ENCODE measurements at regions of chr17 and their contacts with region 1.

Region 1: DNA sequence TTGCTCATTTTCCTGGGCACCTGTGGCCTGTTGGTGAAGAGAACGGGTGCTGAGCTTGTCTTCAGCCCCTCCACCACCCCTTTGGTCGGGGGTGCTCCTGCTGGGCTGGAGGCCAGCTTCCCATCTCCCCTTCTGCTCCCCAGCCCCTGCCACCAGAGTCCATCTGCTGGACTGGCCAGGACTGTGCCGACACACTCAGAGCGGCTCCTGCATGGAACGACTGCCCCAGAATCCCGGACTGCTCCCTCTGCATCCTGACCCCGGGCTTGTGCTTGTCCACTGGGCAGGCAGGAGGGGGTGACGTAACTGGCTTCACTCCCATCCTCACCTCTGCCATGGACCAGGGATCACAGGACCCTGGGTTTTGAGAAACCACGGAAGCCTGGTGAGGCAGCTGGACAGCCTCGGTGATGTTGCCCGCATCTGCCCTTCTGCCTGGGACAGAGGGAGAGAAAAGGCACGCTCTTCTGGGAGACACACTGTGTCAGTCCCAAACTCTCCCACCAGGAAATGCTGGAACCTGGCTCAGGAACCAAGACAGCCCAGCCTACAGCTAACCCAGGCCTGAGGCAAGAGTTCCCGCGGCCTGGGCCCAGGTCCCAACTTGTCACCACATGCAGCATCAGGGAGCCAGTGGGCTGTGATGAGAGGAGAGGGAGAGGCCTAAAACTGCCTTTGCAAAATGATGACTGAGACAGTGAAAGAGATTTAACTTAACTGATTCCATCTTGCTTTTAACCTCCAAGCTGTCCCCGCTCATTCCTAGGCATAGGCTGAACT is 16.1 kb upstream of the GSDMA start:
- DNase-seq: no peak
- ATAC-seq: no peak
- H3K4me3 ChIP-seq: no peak overlapping the region
- H3K4me3 Mint-ChIP-seq: no peak overlapping the region
- H3K27ac ChIP-seq: no peak overlapping the region
- H3K27ac Mint-ChIP-seq: no peak overlapping the region
- H3K4me1 ChIP-seq: peaks cover 0 to 20% of the 10 kb centered on the region in 2 experiments
- H3K4me1 Mint-ChIP-seq: peaks cover 15 to 19% (median 18%) of the 10 kb centered on the region in 3 donors
- H3K27me3 ChIP-seq: peaks cover 0 to 19% of the 10 kb centered on the region in 2 experiments
- H3K27me3 Mint-ChIP-seq: no peaks in the 10 kb centered on the region

Region 2: GRCh38 chr17:40038882-40039513 is 92.3 kb after region 1 on chr17:
- CTCF ChIA-PET with region 1: interaction called in 1 of 2 experiments, 11 read pairs
- POLR2A ChIA-PET with region 1: no interaction called
- DNase-seq: peak in 1 of 35 experiments; percentile 34
- ATAC-seq: no peak
- H3K4me3 ChIP-seq: no peak overlapping the region
- H3K4me3 Mint-ChIP-seq: no peak overlapping the region
- H3K27ac ChIP-seq: no peak overlapping the region
- H3K27ac Mint-ChIP-seq: peak overlapping the region in 1 of 2 donors; percentile 22
- H3K4me1 ChIP-seq: no peaks in the 10 kb centered on the region
- H3K4me1 Mint-ChIP-seq: peaks cover 0 to 7% (median 0%) of the 10 kb centered on the region in 3 donors
- H3K27me3 ChIP-seq: no peaks in the 10 kb centered on the region
- H3K27me3 Mint-ChIP-seq: no peaks in the 10 kb centered on the region

Measured in T-cell (primary cell).